ENCODE measurements at regions of chr10 and their contacts with region 1.

Region 1: GRCh38 chr10:90862908-90863514 is 5.2 kb upstream of the HTR7 start:
- DNase-seq: no peak
- ATAC-seq: no peak
- H3K4me3 ChIP-seq: no peak overlapping the region
- H3K27ac ChIP-seq: no peak overlapping the region
- H3K4me1 ChIP-seq: peaks cover 0 to 17% (median 0%) of the 10 kb centered on the region in 9 donors
- H3K27me3 ChIP-seq: peaks cover 0 to 53% (median 22%) of the 10 kb centered on the region in 7 donors
- CTCF ChIP-seq: peak; percentile 21 to 71 (median 55)

Region 2: DNA sequence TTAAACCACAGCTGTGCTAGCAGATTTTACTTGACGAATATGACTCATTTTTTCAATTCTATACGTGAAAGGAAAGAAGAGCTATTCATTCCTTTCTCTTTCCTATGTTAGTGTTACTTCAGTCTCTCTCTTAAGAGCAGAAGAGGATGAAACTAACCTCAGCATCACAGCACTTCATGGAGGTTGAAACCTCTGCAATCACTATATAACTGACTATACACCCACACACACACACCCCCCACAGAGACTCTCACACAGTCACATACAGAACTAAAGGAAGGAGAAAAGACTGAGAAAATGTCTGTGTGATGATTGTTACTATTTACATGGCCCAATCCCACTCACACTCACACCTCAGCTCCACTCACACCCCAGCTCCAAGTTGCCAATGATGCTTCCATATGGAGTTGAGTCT is 1057.4 kb before region 1 on chr10:
- intact Hi-C with region 1: loop called in 1 of 10 experiments (anchors 5 kb)
- DNase-seq: no peak
- ATAC-seq: no peak
- H3K4me3 ChIP-seq: no peak overlapping the region
- H3K27ac ChIP-seq: no peak overlapping the region
- H3K4me1 ChIP-seq: no peaks in the 10 kb centered on the region
- H3K27me3 ChIP-seq: peaks cover 0 to 29% (median 0%) of the 10 kb centered on the region in 7 donors
- CTCF ChIP-seq: no peak

Region 3: GRCh38 chr10:90484518-90484917 is 378.5 kb before region 1 on chr10:
- intact Hi-C with region 1: no loop called
- DNase-seq: peak; percentile 7 to 13
- ATAC-seq: peak in 5 of 8 donors; percentile 9 to 67 (median 39)
- H3K4me3 ChIP-seq: no peak overlapping the region
- H3K27ac ChIP-seq: no peak overlapping the region
- H3K4me1 ChIP-seq: no peaks in the 10 kb centered on the region
- H3K27me3 ChIP-seq: peaks cover 0 to 7% (median 0%) of the 10 kb centered on the region in 7 donors
- CTCF ChIP-seq: no peak

Region 4: GRCh38 chr10:90741926-90742565 is 121.0 kb before region 1 on chr10:
- intact Hi-C with region 1: loop called in 2 of 10 experiments (anchors 5 to 10 kb)
- DNase-seq: no peak
- ATAC-seq: peak in 6 of 8 donors; percentile 33 to 67 (median 53)
- H3K4me3 ChIP-seq: no peak overlapping the region
- H3K27ac ChIP-seq: peak overlapping the region in 1 of 10 donors; percentile 49
- H3K4me1 ChIP-seq: no peaks in the 10 kb centered on the region
- H3K27me3 ChIP-seq: peaks cover 0 to 7% (median 1%) of the 10 kb centered on the region in 7 donors
- CTCF ChIP-seq: no peak

Region 5: GRCh38 chr10:90751107-90751997 is 111.7 kb before region 1 on chr10:
- intact Hi-C with region 1: loop called in 7 of 10 experiments (anchors 2 to 10 kb)
- DNase-seq: no peak
- ATAC-seq: peak in 2 of 8 donors; percentile 34 to 67
- H3K4me3 ChIP-seq: no peak overlapping the region
- H3K27ac ChIP-seq: no peak overlapping the region
- H3K4me1 ChIP-seq: no peaks in the 10 kb centered on the region
- H3K27me3 ChIP-seq: peaks cover 0 to 33% (median 18%) of the 10 kb centered on the region in 7 donors
- CTCF ChIP-seq: peak in 8 of 9 donors; percentile 29 to 78 (median 65)